Endothelial cell of umbilical vein (primary cell): ENCODE measurements at regions of chr17 and their contacts with region 1.

Region 1: GRCh38 chr17:28112220-28113005 is 69.9 kb downstream of the NLK start:
- DNase-seq: peak; percentile 62
- H3K4me3 ChIP-seq: no peak overlapping the region
- H3K27ac ChIP-seq: peak overlapping the region; percentile 13
- H3K4me1 ChIP-seq: peaks cover 21% of the 10 kb centered on the region
- H3K27me3 ChIP-seq: no peaks in the 10 kb centered on the region
- CTCF ChIP-seq: no peak
- POLR2A ChIP-seq: no peak

Region 2: DNA sequence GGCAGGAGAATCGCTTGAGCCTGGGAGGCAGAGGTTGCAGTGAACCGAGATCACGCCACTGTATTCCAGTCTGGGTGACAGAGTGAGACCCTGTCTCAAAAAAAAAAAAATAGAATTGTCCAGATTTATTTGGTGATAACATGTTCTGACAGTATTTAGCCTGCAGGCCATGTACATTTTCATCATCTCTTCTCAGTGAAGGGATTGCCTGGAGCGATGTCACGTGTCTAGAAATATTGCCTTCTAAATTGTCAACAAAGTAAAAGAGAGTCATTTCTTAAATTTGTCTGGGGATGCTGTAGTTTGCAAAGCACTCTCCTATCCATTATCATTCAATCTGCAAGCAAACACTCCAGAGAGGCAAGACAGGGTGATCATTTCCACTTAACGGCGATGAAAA is 87.7 kb before region 1 on chr17:
- CTCF ChIA-PET with region 1: no interaction called
- POLR2A ChIA-PET with region 1: no interaction called
- dilution Hi-C with region 1: no loop called
- intact Hi-C with region 1: no loop called
- DNase-seq: no peak
- H3K4me3 ChIP-seq: no peak overlapping the region
- H3K27ac ChIP-seq: no peak overlapping the region
- H3K4me1 ChIP-seq: no peaks in the 10 kb centered on the region
- H3K27me3 ChIP-seq: no peaks in the 10 kb centered on the region
- CTCF ChIP-seq: no peak
- POLR2A ChIP-seq: no peak

Region 3: GRCh38 chr17:28100936-28101335 is 11.5 kb before region 1 on chr17:
- CTCF ChIA-PET with region 1: interaction called, 16 read pairs
- POLR2A ChIA-PET with region 1: interaction called, 4 read pairs
- dilution Hi-C with region 1: no loop called
- intact Hi-C with region 1: no loop called
- DNase-seq: no peak
- H3K4me3 ChIP-seq: no peak overlapping the region
- H3K27ac ChIP-seq: no peak overlapping the region
- H3K4me1 ChIP-seq: no peaks in the 10 kb centered on the region
- H3K27me3 ChIP-seq: no peaks in the 10 kb centered on the region
- CTCF ChIP-seq: no peak
- POLR2A ChIP-seq: no peak

Region 4: GRCh38 chr17:28125530-28126378 is 13.3 kb after region 1 on chr17:
- CTCF ChIA-PET with region 1: interaction called, 10 read pairs
- POLR2A ChIA-PET with region 1: no interaction called
- dilution Hi-C with region 1: no loop called
- intact Hi-C with region 1: loop called (anchors 2 kb)
- DNase-seq: no peak
- H3K4me3 ChIP-seq: no peak overlapping the region
- H3K27ac ChIP-seq: no peak overlapping the region
- H3K4me1 ChIP-seq: peaks cover 5% of the 10 kb centered on the region
- H3K27me3 ChIP-seq: no peaks in the 10 kb centered on the region
- CTCF ChIP-seq: no peak
- POLR2A ChIP-seq: no peak